Transverse colon (tissue), 4 donors: ENCODE measurements at regions of chr19 and their contacts with region 1.

Region 1: GRCh38 chr19:372306-372890 is 27.8 kb upstream of the MIER2 start:
- DNase-seq: no peak
- H3K4me3 ChIP-seq: no peak overlapping the region
- H3K27ac ChIP-seq: no peak overlapping the region
- H3K4me1 ChIP-seq: no peaks in the 10 kb centered on the region
- H3K27me3 ChIP-seq: peaks cover 35% of the 10 kb centered on the region
- CTCF ChIP-seq: no peak
- EP300 ChIP-seq: no peak
- POLR2A ChIP-seq: no peak

Region 2: DNA sequence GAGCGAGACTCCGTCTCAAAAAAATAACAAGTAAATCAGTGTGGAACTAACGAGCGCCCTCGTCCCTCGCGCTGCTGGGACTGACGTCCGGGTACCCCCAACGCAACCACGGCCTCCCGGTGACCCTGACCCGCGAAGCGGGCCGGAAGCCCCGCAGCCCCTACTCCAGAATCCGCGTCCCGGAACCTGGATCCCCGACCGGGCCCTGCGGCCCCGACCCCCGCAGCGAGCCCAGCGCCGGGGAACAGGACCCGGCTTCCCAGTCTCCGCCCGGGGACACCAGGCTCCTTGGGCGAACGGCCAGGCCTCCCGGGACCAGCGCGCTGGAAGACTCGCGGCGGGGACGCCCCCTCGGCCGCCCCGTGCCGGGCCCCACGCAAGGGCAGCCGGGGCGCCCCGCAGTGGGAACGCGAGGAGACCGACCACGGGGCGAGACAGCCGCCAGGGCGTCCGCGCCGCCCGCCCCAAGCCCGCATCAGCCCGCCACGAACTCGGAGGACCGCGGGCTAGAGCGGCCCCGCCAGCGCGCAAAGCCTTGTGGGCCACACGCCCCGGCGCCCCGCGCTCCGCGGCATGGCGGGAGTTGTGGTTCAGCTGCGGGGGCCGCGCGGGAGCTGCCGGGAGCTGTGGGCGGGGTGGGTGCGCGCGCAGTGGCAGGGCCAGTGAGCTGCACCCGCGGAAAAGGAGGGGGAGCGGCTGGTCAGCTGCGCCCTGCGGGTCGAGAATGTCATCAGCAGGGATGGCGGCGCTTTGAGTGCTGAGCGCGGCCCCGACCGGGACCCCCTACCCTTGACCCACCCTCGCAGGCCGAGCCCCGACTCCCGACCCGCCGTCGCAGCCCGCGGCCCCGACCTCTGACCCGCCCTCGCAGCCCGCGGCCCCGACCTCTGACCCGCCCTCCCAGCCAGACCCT is 116.4 kb after region 1 on chr19:
- in situ Hi-C with region 1: no loop called
- intact Hi-C with region 1: loop called (anchors 10 kb)
- DNase-seq: peak; percentile 95
- H3K4me3 ChIP-seq: peak overlapping the region; percentile 90 to 99 (median 96)
- H3K27ac ChIP-seq: peak overlapping the region; percentile 93 to 98 (median 96)
- H3K4me1 ChIP-seq: peaks cover 4 to 16% (median 9%) of the 10 kb centered on the region in 4 donors
- H3K27me3 ChIP-seq: peaks cover 23% of the 10 kb centered on the region
- CTCF ChIP-seq: peak in 2 of 5 experiments; percentile 2 to 18
- EP300 ChIP-seq: no peak
- POLR2A ChIP-seq: peak; percentile 72